ENCODE measurements at regions of chr10 and their contacts with region 1.

Region 1: GRCh38 chr10:12264204-12264940 is 68.4 kb downstream of the CDC123 start:
- DNase-seq: peak; percentile 52 to 90 (median 82)

Region 2: GRCh38 chr10:12710594-12711349 is 446.4 kb after region 1 on chr10:
- intact Hi-C with region 1: loop called (anchors 2 kb)
- DNase-seq: peak; percentile 53 to 91 (median 78)

Region 3: DNA sequence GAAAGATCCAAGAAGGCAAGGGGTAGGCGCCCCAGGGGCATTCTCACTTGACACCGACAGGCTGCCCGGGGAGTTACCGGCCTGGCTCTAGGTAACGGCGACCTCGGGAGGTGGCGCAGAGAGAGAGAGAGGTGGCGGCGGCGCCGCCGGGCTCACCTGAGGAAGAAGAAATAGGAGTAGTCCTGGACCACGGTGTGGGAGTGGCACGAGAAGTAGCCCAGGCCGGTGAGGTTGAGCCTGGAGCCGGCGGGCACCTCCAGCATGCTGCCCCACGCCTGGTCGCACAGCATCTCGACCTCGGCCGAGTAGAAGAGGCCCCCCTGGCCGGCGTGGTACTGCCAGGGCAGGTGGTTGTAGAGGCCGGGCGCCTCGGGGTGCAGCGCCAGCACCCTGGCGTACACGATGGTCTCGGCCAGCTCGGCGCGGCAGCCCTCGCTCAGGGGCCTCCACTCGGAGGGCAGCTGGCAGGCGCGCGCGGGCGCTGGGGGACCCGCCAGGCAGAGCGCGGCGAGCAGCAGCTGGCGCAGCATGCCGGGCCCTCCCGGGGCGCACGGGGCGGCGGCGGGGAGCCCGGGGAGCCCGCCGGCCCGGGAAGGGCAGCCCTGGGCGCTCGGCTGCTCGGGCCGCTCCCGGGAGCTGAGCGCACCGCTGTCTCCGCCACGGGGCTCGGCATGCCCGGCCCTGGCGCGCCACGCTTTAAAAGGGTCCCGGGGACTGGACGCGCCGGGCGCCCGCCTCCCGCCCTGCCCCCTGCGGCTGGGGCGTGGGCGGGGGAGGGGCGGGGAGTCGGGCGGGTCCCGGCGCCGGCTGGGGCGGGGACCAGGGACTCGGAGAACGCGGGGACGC is 736.9 kb after region 1 on chr10 and contains the start of gene CCDC3:
- intact Hi-C with region 1: no loop called
- DNase-seq: peak in 18 of 42 donors; percentile 1 to 47 (median 17)

Region 4: GRCh38 chr10:13074561-13075451 is 810.4 kb after region 1 on chr10:
- intact Hi-C with region 1: loop called (anchors 10 kb)
- DNase-seq: peak; percentile 41 to 87 (median 72)